GM13976 (cell line): ENCODE measurements at regions of chr17 and their contacts with region 1.

Region 1: DNA sequence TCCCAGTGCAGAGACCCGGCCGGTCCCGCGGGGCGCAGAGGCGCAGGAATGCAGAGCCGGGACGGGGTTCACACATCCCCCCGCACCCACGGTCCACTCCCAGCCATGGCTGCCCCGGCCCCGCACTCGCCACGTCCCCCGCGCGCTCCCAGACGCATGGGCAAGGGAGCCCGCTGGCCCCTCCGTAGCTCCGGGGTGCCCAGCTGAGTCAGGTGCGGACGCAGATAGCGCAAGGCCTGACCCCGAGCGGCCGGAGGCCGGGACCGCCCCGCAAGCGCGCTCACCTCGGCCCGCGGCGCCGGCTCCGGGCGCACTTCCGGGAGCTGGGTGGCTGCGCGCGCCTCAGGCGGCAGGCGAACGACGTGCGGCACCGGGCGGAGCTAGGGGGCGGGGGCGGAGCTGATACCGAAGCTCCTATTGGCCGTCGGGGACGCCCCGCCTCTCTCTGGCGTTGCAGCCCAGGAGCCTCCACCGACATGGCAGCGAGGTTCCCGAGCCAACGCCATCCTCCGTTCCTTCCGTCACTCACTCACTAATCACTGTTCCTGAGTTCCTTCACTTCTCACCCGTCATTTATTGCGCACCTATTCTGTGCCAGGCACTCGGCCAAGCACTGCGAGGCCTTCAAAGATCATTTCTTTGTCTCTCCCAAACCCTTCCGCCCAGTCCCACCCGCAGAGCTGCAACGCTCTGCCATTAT is at the start of gene ZNF18:
- DNase-seq: peak; percentile 98
- CTCF ChIP-seq: no peak

Region 2: GRCh38 chr17:10875979-10876555 is 1121.2 kb before region 1 on chr17:
- in situ Hi-C with region 1: loop called (anchors 25 kb)
- DNase-seq: peak; percentile 46
- CTCF ChIP-seq: peak; percentile 43

Region 3: DNA sequence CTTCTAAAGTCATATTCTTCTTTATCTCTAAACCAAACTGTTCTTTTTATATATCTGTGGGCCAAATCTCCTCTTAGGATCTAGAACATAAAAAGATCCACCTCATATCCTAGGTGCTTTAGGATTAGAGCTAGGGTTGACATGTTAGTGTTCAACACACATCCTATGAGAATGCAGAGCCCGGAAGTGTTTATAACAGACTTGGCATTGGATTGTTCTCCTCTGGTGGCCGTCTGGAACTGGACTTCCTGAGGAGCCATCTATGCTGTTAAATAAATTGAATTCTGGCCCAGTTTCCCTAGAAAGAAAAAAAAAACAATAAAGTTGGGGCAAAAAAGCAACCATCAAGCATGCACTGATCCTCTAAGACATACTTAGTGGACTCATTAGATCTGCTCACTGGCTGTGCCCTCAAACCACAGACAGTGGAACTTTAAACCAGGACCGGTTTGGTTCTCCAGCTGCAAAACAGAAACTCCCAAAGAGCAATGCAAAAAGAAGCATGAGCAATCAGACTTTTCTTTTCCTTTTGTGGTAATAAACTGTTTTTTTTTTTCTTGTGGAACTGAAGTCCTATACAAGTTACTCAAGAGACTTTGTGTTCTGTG is 182.5 kb before region 1 on chr17:
- in situ Hi-C with region 1: no loop called
- DNase-seq: no peak
- CTCF ChIP-seq: no peak

Region 4: DNA sequence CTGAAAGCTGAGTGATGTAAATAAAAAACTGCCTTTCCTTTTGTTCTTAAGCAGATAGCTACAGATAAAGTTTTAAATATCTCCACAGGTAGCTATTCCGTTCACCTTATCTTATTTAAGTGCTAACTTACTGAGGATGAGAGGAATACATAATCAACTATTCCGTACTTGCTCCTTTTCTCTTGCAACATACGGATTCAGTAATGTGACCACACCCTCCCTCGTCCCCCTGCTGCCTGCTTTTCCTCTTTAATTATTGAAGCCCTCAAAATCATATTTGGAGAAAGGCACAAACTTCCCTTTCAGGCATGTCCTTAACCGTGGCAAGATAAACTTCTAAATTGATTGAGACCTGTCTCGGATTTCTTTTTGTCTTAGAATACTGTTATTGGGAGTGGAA is 124.8 kb after region 1 on chr17:
- in situ Hi-C with region 1: no loop called
- DNase-seq: no peak
- CTCF ChIP-seq: no peak

Region 5: DNA sequence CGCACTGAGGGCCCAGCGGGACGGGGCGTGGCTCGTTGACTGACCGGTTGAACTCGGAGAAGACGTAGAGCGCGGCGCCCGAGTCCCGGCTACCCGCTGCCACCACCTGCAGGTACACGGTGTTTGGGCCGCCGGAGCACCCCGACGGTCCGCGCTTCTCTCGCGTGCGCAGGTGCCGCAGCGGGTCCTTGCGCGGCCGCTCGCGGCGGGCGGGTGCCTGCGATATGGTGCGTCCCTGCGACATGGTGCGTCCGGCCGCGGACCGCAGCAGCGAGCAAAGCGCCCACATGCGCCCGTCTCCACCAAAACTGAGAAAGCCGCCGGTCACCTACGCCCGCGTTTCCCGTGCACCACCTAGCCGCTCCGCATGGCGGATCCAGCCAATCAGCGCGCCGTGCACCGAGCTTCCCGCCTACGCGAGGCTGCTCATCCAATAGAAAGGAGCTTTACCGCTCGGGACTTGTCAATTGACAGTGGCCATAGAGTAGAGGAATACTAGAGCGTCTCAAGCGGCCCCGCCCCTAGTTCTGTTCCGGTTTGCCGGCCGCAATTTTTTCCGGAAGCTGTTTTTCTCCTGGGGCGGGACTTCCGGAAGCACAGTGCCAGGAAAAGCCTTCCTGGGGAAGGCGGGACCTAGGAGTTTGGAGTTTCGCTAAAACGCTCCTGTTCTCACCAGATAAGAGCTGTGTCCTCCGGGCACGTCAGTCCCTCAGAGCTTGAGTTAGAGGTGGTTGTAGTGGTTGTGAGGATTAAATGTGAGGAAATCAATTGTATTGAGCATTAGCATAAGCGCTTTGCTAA is 1020.6 kb after region 1 on chr17 and contains the start of gene ELAC2:
- in situ Hi-C with region 1: loop called (anchors 25 kb)
- DNase-seq: peak; percentile 97
- CTCF ChIP-seq: no peak